ENCODE measurements at regions of chr3 and their contacts with region 1.

Region 1: GRCh38 chr3:16048435-16049318 is 125.8 kb upstream of the GALNT15 start:
- DNase-seq: no peak
- H3K4me3 ChIP-seq: peak overlapping the region in 2 of 8 donors; percentile 33 to 61
- H3K27ac ChIP-seq: peak overlapping the region in 3 of 8 donors; percentile 79 to 83 (median 81)
- H3K4me1 ChIP-seq: peaks cover 0 to 38% (median 21%) of the 10 kb centered on the region in 6 donors
- H3K27me3 ChIP-seq: no peaks in the 10 kb centered on the region
- CTCF ChIP-seq: peak; percentile 47 to 83 (median 72)
- POLR2A ChIP-seq: no peak

Region 2: DNA sequence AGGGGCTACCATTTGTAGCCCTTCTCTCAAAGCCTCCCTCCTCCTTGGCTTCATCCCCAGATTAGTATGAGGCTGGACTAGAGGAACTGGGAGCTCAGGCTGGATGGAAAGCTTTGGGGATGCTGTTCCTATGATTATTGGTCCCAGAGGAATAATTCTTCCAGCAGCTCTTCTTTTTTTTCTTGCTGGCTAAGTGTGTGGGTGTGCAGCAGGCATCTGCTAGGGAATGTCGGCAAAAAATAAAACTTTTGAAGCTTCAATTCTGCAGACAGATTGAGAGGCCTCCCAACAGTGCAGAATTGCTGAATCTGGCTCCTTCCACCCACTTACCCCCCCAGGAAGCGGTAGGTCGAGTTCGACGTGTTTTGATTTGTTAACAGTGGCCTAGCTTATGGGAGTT is 112.4 kb before region 1 on chr3:
- intact Hi-C with region 1: no loop called
- DNase-seq: no peak
- H3K4me3 ChIP-seq: no peak overlapping the region
- H3K27ac ChIP-seq: no peak overlapping the region
- H3K4me1 ChIP-seq: peaks cover 0 to 10% (median 2%) of the 10 kb centered on the region in 6 donors
- H3K27me3 ChIP-seq: no peaks in the 10 kb centered on the region
- CTCF ChIP-seq: no peak
- POLR2A ChIP-seq: no peak

Region 3: DNA sequence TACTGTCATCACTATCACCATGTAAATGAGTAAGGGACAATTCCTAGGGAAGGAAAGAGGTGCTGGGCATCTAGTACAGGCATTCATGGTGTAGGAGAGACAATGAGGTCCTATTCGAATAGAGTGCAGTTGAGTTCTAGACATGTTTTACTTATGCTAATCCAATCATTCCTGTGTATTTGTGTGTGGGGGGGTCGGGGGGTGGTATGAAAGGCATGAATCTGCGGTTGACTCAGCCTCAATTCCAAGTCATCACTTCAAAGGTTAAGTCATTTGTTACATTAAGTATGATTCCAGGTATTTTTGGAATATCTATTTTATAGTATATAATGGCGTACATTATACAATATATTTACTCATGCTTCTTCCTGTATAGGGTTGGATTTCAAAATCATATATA is 37.3 kb before region 1 on chr3:
- intact Hi-C with region 1: no loop called
- DNase-seq: no peak
- H3K4me3 ChIP-seq: no peak overlapping the region
- H3K27ac ChIP-seq: no peak overlapping the region
- H3K4me1 ChIP-seq: no peaks in the 10 kb centered on the region
- H3K27me3 ChIP-seq: no peaks in the 10 kb centered on the region
- CTCF ChIP-seq: no peak
- POLR2A ChIP-seq: no peak

Region 4: DNA sequence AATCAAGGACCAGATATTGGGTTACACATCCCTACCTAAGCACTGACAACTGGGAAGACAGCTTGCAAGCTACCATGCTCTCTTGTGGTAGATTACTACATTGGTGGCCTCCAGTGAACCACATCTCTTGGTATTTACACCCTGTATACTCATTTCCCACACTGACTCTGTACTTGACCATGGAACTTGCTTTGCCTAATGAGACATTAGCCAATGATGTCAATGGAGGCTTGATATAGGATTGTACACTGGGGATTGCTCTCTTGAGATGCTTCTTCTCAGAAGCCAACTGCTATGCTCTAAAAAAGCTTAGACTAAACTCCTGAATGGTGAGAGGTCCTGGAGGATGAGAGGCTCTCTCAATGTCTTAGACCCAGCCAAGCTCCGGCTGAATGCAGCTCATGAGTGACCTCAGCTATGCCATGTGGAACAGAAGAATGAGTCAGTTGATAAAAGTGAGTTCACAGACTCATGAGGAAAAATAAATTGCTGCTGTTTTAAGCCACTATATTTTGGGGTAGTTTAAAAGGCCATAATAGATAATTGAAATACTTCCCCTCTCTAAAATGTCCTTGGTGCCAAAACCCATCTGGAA is 64.3 kb after region 1 on chr3:
- intact Hi-C with region 1: loop called (anchors 5 kb)
- DNase-seq: no peak
- H3K4me3 ChIP-seq: no peak overlapping the region
- H3K27ac ChIP-seq: peak overlapping the region in 7 of 8 donors; percentile 2 to 79 (median 70)
- H3K4me1 ChIP-seq: no peaks in the 10 kb centered on the region
- H3K27me3 ChIP-seq: no peaks in the 10 kb centered on the region
- CTCF ChIP-seq: no peak
- POLR2A ChIP-seq: no peak

Region 5: GRCh38 chr3:16177962-16178627 is 129.4 kb after region 1 on chr3:
- intact Hi-C with region 1: loop called (anchors 5 kb)
- DNase-seq: peak; percentile 90
- H3K4me3 ChIP-seq: peak overlapping the region; percentile 18 to 72 (median 40)
- H3K27ac ChIP-seq: peak overlapping the region in 1 of 8 donors; percentile 2
- H3K4me1 ChIP-seq: peaks cover 0 to 51% (median 16%) of the 10 kb centered on the region in 6 donors
- H3K27me3 ChIP-seq: peaks cover 0 to 24% (median 0%) of the 10 kb centered on the region in 7 donors
- CTCF ChIP-seq: peak; percentile 63 to 97 (median 91)
- POLR2A ChIP-seq: no peak

Region 6: GRCh38 chr3:16227566-16227965 is 178.9 kb after region 1 on chr3:
- intact Hi-C with region 1: no loop called
- DNase-seq: no peak
- H3K4me3 ChIP-seq: no peak overlapping the region
- H3K27ac ChIP-seq: no peak overlapping the region
- H3K4me1 ChIP-seq: peaks cover 0 to 7% (median 0%) of the 10 kb centered on the region in 6 donors
- H3K27me3 ChIP-seq: no peaks in the 10 kb centered on the region
- CTCF ChIP-seq: no peak
- POLR2A ChIP-seq: no peak

Region 7: GRCh38 chr3:16240283-16241023 is 191.8 kb after region 1 on chr3:
- intact Hi-C with region 1: loop called (anchors 5 kb)
- DNase-seq: no peak
- H3K4me3 ChIP-seq: no peak overlapping the region
- H3K27ac ChIP-seq: no peak overlapping the region
- H3K4me1 ChIP-seq: peaks cover 0 to 12% (median 1%) of the 10 kb centered on the region in 6 donors
- H3K27me3 ChIP-seq: no peaks in the 10 kb centered on the region
- CTCF ChIP-seq: no peak
- POLR2A ChIP-seq: no peak